Activated CD8-positive, alpha-beta T cell treated with anti-CD3 and anti-CD28 coated beads, Interleukin-2, amount 10 ng/mL, durations not matched to agents 7 days and 5 days (primary cell): ENCODE measurements at regions of chr1 and their contacts with region 1.

Region 1: DNA sequence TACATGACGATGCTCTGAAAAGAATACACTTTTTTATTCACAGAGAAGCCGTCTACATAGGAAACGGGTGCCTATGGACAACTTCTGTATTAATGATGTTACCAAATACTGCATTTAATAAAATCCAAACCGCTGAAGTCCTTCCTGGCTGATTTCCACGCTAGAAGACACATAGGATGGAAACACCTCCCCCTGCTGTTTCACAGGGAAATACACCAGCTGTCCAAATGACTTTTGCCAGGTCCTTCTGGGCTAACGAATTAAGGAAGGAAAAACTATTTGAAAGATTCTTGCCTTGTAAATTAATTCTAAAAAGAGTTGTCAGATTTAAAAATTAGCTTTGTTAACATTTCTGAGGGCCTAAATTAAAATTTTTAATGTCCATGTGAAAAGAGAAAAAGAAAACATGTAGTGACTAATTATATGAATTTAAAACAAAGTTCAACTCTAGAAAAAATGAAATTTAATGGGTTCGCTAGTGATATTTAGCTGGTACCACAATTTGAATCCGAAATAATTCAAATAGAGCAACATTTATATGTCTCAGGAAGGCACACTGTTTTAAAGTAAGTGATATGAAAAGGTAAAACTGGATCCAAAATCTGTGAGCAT is 146.0 kb downstream of the RERE start:
- DNase-seq: peak; percentile 41
- ATAC-seq: no peak
- H3K4me3 Mint-ChIP-seq: no peak overlapping the region
- H3K27ac Mint-ChIP-seq: no peak overlapping the region
- H3K4me1 Mint-ChIP-seq: peaks cover 26% of the 10 kb centered on the region
- H3K27me3 Mint-ChIP-seq: no peaks in the 10 kb centered on the region

Region 2: DNA sequence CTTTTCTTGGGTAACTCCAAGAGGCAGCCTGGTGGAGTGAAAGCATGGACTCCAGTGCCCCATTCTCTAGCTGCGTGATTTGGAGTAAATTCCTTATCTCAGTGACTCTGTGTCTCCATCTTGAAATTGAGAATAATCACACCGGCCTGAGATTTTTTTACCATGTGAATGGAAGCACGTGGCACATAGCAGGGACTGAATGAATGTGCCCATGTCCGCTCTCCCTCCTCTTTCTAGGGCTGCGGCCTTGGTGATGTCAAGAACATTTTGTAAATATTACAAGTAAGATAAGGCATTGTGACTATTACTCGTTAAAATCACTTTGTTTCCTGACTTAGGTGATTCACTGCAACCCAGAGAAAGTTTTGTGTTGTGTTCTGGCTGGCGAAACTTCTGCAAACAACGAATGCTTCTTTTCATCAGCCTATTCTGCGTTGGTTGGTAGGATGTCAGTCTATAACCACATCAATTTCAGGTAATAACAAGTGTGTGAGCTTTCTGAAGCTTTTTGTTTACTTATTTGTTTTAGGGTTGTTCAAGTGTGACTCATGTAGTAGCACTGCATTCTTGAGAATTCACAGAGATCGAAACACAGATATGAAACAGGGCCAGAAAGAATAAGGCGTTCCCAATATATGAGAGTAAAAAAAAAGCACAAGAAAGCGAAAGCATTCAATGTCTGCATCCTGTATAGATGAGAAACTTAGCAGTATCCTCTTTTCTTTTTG is 489.2 kb before region 1 on chr1:
- CTCF ChIA-PET with region 1: no interaction called
- POLR2A ChIA-PET with region 1: no interaction called
- DNase-seq: no peak
- ATAC-seq: no peak
- H3K4me3 Mint-ChIP-seq: no peak overlapping the region
- H3K27ac Mint-ChIP-seq: no peak overlapping the region
- H3K4me1 Mint-ChIP-seq: peaks cover 2% of the 10 kb centered on the region
- H3K27me3 Mint-ChIP-seq: peaks cover 3% of the 10 kb centered on the region

Region 3: DNA sequence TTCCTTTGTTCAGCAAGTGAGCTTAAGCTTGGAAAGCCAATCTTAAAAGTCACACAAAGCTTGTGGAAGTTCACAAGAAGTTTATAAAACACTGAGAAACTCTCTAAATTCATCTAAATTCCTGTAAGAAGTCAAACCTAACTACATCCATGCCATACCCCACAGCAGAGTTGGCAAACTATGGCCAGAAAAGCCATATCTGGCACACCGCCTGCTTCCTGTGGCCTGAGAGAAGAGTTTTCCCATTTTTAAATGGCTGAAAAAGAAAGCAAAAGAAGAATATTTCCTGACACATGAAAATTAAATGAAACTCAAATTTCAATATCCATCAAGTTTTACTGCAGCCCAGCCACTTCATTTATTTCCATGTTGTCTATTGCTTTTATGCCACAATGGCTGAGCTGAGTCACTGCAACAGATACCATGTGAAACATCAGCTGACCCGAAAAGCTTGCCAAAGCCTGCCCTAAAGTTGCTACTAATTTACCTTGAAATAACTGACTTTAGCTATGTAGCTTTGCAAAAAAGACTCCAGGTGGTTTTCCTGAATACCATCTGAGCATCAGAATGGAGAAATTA is 116.4 kb before region 1 on chr1:
- CTCF ChIA-PET with region 1: interaction called, 11 read pairs
- POLR2A ChIA-PET with region 1: no interaction called
- DNase-seq: no peak
- ATAC-seq: peak; percentile 38
- H3K4me3 Mint-ChIP-seq: no peak overlapping the region
- H3K27ac Mint-ChIP-seq: no peak overlapping the region
- H3K4me1 Mint-ChIP-seq: peaks cover 37% of the 10 kb centered on the region
- H3K27me3 Mint-ChIP-seq: no peaks in the 10 kb centered on the region

Region 4: DNA sequence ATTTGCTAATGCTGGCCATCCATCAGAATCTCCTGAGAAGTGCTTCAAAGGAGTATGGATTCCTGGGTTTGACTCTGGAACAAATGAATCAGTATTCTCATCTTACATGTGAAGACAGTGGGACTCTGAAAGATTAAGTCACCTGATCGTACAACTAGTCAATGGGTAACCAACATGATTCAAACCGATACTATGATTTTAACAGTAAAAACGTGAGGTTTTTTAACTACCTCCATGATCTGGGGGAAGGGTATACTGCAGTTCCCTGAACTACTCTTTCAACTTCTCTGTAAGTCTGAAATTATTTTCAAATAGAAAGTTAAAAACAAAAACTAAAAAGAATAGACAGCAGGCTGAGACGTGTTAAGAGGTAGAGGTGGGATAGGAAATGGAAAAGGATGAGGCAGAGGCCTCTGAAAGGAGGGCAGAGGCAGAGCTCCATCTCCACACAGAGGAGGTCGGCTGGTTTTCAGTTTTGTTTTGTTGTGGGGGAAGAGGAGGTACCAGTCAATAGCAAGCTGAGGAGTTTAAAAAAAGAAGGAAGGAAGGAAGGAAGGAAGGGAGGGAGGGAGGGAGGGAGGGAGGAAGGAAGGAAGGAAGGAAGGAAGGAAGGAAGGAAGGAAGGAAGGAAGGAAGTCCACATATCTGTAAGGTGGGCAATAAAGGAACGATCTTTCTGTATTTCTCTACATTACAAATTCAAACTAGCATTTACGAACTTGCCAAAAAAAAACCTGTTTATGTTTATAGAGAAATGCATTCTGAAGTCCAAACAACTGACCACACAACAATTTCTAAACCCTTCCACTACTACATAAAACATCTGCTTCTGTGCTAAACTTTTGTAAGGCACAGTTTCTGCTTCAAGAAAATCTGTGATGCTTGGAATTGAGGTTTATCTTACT is 67.1 kb before region 1 on chr1:
- CTCF ChIA-PET with region 1: interaction called, 19 read pairs
- POLR2A ChIA-PET with region 1: interaction called, 3 read pairs
- DNase-seq: peak; percentile 68
- ATAC-seq: peak; percentile 88
- H3K4me3 Mint-ChIP-seq: peak overlapping the region; percentile 70
- H3K27ac Mint-ChIP-seq: peak overlapping the region; percentile 91
- H3K4me1 Mint-ChIP-seq: peaks cover 37% of the 10 kb centered on the region
- H3K27me3 Mint-ChIP-seq: no peaks in the 10 kb centered on the region

Region 5: DNA sequence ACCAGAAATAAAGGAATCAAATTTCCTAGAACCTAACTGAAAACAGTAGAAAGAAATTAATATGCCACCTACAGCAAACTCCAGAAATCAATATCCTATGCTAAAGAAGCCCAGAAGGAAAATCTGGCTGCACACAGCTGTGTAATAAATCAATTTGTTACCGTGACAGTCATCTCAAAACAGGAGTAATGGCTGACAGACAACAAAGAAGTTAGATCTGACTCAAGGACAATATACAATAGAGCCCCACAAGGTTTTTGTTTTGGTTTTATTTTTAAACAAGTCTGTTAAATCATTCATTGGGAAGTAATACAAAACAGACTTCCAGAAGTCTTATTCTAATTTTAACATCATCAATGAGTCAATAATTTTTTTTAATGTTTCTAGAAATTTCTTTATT is 22.4 kb before region 1 on chr1:
- CTCF ChIA-PET with region 1: interaction called, 38 read pairs
- POLR2A ChIA-PET with region 1: interaction called, 8 read pairs
- DNase-seq: no peak
- ATAC-seq: peak; percentile 28
- H3K4me3 Mint-ChIP-seq: no peak overlapping the region
- H3K27ac Mint-ChIP-seq: no peak overlapping the region
- H3K4me1 Mint-ChIP-seq: peaks cover 54% of the 10 kb centered on the region
- H3K27me3 Mint-ChIP-seq: no peaks in the 10 kb centered on the region

Region 6: DNA sequence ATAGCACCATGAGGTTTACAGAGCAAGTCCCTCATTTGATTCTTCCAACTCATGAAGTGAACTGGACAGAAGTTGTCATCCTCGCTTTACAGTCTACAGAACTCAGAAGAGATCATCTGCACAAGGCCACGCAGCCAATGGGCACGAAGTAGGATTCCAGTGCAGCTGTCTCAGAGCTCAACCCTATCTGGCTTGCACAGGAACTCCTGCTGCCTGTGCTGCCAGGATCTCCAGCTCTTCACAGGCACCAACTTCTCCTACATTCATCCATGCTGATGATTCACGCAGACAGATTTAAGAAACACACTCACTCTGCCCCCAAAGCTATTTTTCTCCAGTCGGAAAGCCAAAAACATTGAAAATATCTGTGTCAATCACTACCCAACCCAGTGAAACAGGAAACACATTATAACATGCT is 11.0 kb before region 1 on chr1:
- CTCF ChIA-PET with region 1: interaction called, 35 read pairs
- POLR2A ChIA-PET with region 1: interaction called, 3 read pairs
- DNase-seq: no peak
- ATAC-seq: no peak
- H3K4me3 Mint-ChIP-seq: no peak overlapping the region
- H3K27ac Mint-ChIP-seq: no peak overlapping the region
- H3K4me1 Mint-ChIP-seq: no peaks in the 10 kb centered on the region
- H3K27me3 Mint-ChIP-seq: no peaks in the 10 kb centered on the region

Region 7: DNA sequence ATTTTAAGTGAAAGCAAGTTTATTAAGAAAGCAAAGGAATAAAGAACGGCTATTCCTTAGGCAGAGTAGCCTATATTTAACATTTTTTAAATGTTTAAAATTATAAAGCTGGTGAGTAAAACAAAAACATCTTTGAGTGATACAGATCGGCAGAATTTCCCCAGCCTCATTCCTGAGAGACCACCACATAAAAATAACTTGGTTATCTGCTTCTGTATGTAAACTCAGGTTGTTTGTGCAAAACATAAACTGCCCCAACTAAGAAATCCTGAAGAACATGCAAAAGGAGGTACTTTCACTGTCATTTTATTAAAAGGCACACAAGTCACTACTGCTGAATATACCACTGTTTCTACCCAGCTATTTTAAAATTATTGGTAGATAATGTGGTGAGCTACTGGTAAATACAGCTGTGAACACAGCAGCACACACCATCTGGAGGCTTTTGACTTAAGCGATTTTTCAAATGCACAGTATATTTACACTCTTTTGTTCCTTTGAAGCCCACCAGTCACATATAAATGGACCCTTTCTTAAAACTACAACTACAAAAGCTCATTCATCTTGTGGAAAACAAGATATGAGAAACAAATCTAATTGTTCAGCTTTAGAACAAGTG is 26.7 kb after region 1 on chr1:
- CTCF ChIA-PET with region 1: interaction called, 20 read pairs
- POLR2A ChIA-PET with region 1: interaction called, 3 read pairs
- DNase-seq: no peak
- ATAC-seq: no peak
- H3K4me3 Mint-ChIP-seq: no peak overlapping the region
- H3K27ac Mint-ChIP-seq: no peak overlapping the region
- H3K4me1 Mint-ChIP-seq: peaks cover 35% of the 10 kb centered on the region
- H3K27me3 Mint-ChIP-seq: no peaks in the 10 kb centered on the region

Region 8: DNA sequence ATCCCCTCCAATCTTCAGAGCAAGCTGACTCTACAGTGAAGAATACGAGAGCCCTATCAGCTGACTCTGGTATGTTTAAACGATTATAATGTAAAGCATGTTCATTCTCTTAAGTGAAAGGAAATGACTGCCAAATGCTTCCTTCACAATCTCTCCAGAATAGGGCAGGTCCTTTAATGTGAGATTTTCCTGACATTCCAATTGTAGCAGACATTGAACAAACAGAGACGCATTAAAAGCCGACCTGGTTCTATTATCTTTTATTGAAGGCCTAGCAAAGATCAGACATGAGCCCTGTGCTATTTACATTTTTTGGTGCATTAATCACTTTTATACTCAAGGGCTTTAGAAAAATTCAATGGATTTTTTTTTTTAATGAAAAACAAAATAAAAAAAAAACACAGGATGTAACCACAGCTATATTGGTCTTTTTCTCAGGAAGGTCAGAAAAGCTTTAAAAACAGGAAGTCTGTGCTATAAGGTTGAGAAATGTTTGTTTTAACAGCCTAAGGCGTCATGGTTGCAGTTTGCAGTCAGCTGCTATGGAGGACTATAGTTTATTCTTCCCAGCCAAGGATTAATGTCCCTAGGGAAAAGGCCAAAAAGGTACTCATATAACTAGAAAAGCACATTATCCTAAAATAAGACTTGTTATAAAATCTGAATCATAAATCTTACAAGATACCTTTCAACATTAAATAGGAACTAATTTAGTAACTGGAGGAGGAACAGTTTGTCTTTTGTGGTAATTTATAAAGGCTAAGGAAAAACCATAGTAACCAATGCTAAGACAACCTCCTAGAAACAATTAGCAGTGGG is 41.2 kb after region 1 on chr1:
- CTCF ChIA-PET with region 1: no interaction called
- POLR2A ChIA-PET with region 1: no interaction called
- DNase-seq: no peak
- ATAC-seq: peak; percentile 66
- H3K4me3 Mint-ChIP-seq: peak overlapping the region; percentile 40
- H3K27ac Mint-ChIP-seq: peak overlapping the region; percentile 67
- H3K4me1 Mint-ChIP-seq: peaks cover 25% of the 10 kb centered on the region
- H3K27me3 Mint-ChIP-seq: no peaks in the 10 kb centered on the region

Region 9: DNA sequence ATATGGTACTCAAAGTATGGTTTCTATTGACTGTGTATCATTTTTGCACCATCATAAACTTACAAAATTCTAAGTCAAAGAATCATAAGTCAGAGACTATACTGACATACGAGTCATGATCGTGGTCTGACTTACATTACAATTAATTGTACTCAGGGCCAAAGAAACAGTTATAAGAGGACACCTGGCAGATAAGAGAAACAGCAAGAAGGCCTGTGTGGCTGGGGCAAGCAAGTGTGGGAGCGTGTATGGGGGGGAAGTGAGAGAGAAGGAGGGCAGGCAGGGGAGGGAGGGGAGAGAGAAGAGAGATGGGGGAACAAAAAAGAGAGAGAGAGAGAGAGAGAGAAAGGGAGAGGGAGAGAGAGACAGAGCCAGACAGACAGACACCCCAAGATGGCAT is 75.1 kb after region 1 on chr1:
- CTCF ChIA-PET with region 1: no interaction called
- POLR2A ChIA-PET with region 1: no interaction called
- DNase-seq: no peak
- ATAC-seq: no peak
- H3K4me3 Mint-ChIP-seq: no peak overlapping the region
- H3K27ac Mint-ChIP-seq: no peak overlapping the region
- H3K4me1 Mint-ChIP-seq: no peaks in the 10 kb centered on the region
- H3K27me3 Mint-ChIP-seq: no peaks in the 10 kb centered on the region

Region 10: DNA sequence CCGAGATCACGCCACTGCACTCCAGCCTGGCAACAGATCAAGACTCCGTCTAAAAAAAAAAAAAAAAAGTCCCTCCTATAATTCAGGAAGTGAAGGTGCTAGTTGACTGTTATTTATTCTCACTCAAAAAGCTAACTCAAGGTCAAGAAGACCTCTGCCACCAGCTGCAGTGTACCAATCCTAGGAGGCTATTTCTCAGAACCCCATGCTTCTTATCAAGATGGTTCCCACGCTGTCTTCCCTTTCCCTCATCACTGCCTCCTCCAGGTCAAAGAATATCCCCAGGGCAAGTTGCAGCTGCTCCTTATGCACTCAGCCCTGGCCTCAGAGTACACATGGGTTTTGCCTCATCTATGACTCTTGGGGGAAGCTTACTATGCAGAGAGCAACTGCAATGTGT is 92.5 kb after region 1 on chr1:
- CTCF ChIA-PET with region 1: no interaction called
- POLR2A ChIA-PET with region 1: no interaction called
- DNase-seq: no peak
- ATAC-seq: no peak
- H3K4me3 Mint-ChIP-seq: no peak overlapping the region
- H3K27ac Mint-ChIP-seq: no peak overlapping the region
- H3K4me1 Mint-ChIP-seq: peaks cover 4% of the 10 kb centered on the region
- H3K27me3 Mint-ChIP-seq: no peaks in the 10 kb centered on the region

Region 11: DNA sequence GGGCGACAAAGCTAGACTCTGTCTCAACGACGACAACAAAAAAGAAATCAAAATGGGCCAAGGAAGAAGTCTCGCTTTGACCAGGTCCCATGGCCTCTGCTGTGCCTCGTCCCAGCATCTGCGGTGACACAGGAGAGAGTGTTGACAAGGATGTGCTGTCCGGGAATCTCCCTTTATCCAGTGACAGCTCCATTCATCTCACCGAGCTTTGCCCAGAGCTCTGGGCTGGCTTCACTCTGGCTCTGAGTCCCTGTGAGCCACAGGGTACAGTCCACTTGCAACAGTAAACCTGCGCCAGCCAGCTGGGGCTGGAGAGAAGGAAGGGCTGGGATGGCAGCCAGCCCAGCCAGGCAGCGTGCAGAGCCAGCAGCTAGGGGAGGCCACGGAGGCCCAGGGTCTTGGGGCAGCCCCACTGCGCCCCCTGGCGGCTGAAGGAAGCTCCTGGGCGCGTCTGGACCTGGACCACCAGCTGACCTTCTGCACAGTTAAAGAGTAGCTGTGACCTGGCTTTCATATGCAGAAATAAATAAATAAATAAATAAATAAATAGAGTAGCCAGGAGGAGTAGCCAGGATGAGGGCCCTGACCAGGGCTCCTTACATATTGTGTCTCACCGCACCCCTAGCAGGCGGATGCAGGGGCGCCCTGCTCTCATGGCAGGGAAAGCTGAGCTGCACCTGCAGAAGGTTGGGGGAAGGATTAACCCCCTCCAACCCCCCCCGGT is 177.4 kb after region 1 on chr1:
- CTCF ChIA-PET with region 1: interaction called, 10 read pairs
- POLR2A ChIA-PET with region 1: no interaction called
- DNase-seq: peak; percentile 80
- ATAC-seq: peak; percentile 96
- H3K4me3 Mint-ChIP-seq: no peak overlapping the region
- H3K27ac Mint-ChIP-seq: no peak overlapping the region
- H3K4me1 Mint-ChIP-seq: peaks cover 12% of the 10 kb centered on the region
- H3K27me3 Mint-ChIP-seq: peaks cover 2% of the 10 kb centered on the region